ENCODE measurements at regions of chr14 and their contacts with region 1.

Region 1: GRCh38 chr14:64986578-64987571 is at the start of gene FNTB:
- DNase-seq: peak; percentile 90
- H3K4me3 Mint-ChIP-seq: peak within 1 kb of the TSS; percentile 93
- H3K27ac Mint-ChIP-seq: peak within 1 kb of the TSS; percentile 96
- H3K4me1 Mint-ChIP-seq: peaks cover 43% of the 10 kb centered on the region
- H3K27me3 Mint-ChIP-seq: peaks cover 20% of the 10 kb centered on the region
- total RNA-seq, gene FNTB: 14.8 and 17.5 TPM in 2 replicates

Region 2: DNA sequence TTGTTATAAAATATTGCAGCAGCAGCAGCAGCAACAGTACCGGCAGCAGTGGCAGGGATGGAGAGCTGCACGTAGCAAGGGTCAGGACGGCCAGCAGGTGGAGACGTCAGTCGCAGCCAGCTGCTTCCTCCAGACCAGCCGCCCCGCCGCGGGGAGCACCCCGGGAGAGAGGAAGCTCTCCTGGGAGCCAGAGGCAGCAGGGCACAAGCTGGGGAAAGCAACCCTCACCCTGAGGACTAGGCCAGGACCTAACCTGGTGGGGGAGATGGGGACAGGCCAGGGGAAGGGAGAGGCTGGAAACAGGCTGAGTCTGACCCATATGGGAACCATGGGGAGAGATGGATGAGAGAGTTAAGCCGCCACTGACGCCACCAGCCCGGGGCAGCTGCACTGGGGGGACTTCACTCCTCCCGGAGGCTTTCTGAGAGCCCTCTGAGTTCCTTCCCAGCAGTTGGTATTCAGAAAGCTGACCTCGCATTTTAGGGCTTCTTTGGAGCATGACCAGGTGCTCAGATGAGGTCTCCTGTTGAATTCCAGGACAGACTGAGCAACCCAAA is 163.5 kb before region 1 on chr14:
- intact Hi-C with region 1: loop called (anchors 1 kb)
- DNase-seq: peak; percentile 47
- H3K4me3 Mint-ChIP-seq: peak overlapping the region; percentile 19
- H3K27ac Mint-ChIP-seq: no peak overlapping the region
- H3K4me1 Mint-ChIP-seq: peaks cover 5% of the 10 kb centered on the region
- H3K27me3 Mint-ChIP-seq: peaks cover 38% of the 10 kb centered on the region

Region 3: DNA sequence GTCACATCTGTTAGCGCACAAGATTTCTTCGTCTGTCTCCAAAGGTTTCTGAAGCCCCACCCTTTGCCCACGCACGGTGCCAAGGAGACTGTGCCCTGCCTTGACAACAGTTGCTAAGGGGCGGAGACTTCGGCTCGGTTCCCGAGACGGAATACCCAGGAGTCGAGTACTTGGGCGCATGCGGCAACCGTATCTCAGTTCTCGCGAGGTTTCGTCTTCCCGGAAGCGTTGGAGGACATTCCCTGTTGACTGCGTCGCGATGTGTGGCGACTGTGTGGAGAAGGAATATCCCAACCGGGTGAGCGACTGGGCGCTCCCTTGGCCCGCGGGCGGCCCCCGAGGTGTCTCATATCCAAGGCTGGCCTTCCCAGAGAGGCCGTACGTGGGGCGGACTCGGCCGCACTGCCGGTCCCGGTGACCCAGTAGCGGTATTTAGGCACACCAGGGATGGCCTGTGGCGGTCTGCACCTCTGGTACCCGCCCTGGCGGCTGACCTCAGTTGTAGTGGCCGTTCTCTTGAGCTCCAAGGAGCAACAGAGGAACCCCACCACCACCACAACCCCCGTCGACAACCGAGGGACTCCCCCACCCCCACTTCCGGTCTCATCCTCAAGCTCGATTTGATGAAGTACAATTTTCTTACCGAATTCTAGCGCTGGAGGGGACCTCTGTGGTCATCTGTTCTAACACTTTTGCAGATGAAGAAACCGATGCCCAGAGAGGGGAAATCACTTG is 72.5 kb before region 1 on chr14 and contains the start of gene CHURC1:
- intact Hi-C with region 1: loop called (anchors 5 kb)
- DNase-seq: peak; percentile 92
- H3K4me3 Mint-ChIP-seq: peak within 1 kb of the TSS; percentile 92
- H3K27ac Mint-ChIP-seq: peak within 1 kb of the TSS; percentile 97
- H3K4me1 Mint-ChIP-seq: peaks cover 53% of the 10 kb centered on the region
- H3K27me3 Mint-ChIP-seq: peaks cover 6% of the 10 kb centered on the region
- total RNA-seq, gene CHURC1: 44.4 and 55.3 TPM in 2 replicates

Region 4: DNA sequence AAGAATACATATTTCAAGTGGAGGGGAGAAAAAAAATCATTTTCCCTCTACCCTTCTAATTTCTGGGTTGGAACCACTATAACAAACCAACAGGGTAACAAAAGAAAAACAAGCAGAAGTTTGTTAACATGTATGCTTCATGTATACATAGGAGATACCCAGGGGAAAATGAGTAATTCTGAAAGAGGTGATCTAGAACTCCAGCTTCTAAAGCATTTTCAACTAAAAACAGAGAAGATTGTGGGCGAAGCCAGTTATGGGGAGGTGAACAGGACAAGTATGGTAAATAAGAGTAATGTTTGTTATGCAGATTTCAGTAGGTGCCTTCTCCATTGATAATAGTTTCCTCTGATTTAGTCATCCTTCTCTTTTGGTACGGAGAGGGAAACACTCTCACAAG is 16.5 kb after region 1 on chr14:
- intact Hi-C with region 1: loop called (anchors 2 kb)
- DNase-seq: no peak
- H3K4me3 Mint-ChIP-seq: no peak overlapping the region
- H3K27ac Mint-ChIP-seq: peak overlapping the region; percentile 68
- H3K4me1 Mint-ChIP-seq: peaks cover 33% of the 10 kb centered on the region
- H3K27me3 Mint-ChIP-seq: no peaks in the 10 kb centered on the region

Region 5: DNA sequence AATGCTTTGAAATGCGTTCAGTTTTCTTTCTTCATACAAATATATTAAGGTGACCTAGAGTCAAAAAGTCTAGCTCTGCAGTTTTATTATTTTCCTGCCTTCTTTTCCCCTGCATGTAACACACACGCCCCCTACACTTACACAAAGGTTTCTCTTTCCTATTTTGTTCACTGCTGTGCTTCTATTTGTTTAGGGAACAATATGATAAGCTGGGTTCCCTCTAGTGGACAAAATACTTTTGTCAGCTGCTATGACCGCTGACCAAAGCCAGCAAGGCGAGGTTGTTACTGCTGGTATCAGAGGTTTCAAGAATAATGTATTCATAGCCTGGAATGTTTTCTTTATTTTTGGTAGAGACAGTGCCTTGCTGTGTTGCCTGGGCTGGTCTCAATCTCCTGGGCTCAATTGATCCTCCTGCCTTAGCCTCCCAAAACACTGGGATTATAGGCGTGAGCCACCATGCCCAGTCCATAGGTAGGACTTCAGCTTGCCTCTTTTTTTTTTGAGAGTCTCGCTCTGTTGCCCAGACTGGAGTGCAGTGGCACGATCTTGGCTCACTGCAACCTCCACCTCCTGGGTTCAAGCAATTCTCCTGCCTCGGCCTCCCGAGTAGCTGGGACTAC is 33.2 kb after region 1 on chr14:
- intact Hi-C with region 1: loop called (anchors 1 kb)
- DNase-seq: no peak
- H3K4me3 Mint-ChIP-seq: no peak overlapping the region
- H3K27ac Mint-ChIP-seq: no peak overlapping the region
- H3K4me1 Mint-ChIP-seq: no peaks in the 10 kb centered on the region
- H3K27me3 Mint-ChIP-seq: no peaks in the 10 kb centered on the region

Region 6: GRCh38 chr14:65102441-65103149 is 115.7 kb after region 1 on chr14 and contains the start of gene MAX:
- intact Hi-C with region 1: loop called (anchors 1 kb)
- DNase-seq: peak; percentile 99
- H3K4me3 Mint-ChIP-seq: peak within 1 kb of the TSS; percentile 92
- H3K27ac Mint-ChIP-seq: peak within 1 kb of the TSS; percentile 94
- H3K4me1 Mint-ChIP-seq: peaks cover 40% of the 10 kb centered on the region
- H3K27me3 Mint-ChIP-seq: peaks cover 6% of the 10 kb centered on the region
- total RNA-seq, gene MAX: 113 and 115 TPM in 2 replicates

Region 7: DNA sequence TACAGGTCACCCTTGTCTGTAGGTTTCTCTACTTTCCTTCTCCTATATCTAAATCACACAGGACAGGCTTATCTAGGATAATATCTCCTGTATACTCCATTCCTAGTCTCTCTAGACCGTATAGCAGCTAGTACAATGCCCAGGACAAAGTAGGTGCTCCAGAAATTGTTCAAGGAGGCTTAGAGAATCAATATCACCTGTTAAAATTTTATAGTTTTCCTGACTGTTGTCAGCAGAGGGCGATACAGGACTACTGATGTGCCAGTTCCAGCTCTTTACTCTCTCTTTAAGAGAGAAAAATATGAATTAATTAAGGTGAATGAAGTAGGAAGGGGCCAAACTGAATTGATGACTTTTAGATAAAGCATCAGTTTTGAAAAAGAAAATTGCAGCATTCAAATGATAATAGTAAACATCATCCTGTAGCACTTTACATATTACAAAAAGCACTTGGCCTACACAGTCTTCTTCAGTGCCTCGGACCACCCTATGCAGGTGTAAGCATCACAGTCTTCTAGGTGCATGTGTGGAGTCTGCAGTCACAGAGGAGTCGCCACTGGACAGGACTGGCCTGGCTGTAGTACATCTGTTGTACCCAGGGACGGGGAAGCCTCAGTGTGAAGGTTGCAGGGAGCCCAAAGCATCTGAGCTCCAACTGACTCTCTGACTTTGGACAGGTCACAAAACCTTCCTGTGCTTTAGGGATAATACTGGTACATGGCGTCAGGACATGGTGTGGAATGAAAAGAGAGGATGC is 177.4 kb after region 1 on chr14:
- intact Hi-C with region 1: loop called (anchors 1 kb)
- DNase-seq: no peak
- H3K4me3 Mint-ChIP-seq: no peak overlapping the region
- H3K27ac Mint-ChIP-seq: no peak overlapping the region
- H3K4me1 Mint-ChIP-seq: peaks cover 31% of the 10 kb centered on the region
- H3K27me3 Mint-ChIP-seq: no peaks in the 10 kb centered on the region

Measured in activated T-helper 2 cell treated with anti-CD3 and anti-CD28 coated beads, Interferon-gamma antibody, Interleukin-2, Interleukin-4, amounts not matched to agents 10 μg/mL and 5 μg/mL and 100 μg/mL, durations not matched to agents 14 hours and 24 hours and 36 hours (primary cell).